ENCODE measurements at regions of chr3 and their contacts with region 1.

Region 1: DNA sequence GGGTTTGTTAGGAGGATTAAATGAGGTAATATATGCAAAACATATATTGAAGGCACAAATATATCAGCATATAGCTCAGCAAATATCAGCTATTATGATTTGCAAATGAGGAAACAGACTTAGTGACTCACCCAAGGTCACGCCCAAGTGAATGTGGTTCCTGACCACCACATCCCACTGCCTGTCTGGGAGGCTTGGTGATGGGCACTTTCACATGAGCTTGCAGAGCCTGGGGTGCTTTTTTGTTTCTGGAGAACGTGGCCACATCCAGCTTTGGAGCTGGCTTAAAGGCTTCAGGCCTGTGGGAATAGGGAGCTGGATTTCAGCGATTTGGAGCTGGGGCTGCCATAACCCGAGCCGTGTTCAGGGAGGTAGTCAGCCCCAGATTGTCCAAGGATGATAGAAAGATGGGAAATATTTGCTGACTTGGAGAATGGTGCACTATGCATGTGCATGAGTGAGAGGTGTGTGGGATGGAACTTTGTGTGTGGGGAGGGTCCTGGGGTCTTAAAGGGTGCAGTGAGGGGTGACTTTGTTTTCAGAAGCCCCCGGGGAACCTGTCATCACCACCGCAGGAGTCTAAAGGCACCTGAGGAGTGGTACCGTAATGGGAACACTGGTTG is 12.0 kb upstream of the FGD5 start:
- DNase-seq: no peak
- ATAC-seq: no peak
- H3K4me3 ChIP-seq: no peak overlapping the region
- H3K27ac ChIP-seq: no peak overlapping the region
- H3K4me1 ChIP-seq: peaks cover 8 to 29% of the 10 kb centered on the region in 2 experiments; a peak in 3 of 4 replicates
- H3K27me3 ChIP-seq: no peaks in the 10 kb centered on the region
- CTCF ChIP-seq: no peak
- POLR2A ChIP-seq: no peak
- RAD21 ChIP-seq: no peak

Region 2: GRCh38 chr3:14899993-14900618 is 93.4 kb after region 1 on chr3:
- CTCF ChIA-PET with region 1: no interaction called
- POLR2A ChIA-PET with region 1: no interaction called
- RAD21 ChIA-PET with region 1: no interaction called
- intact Hi-C with region 1: loop called (anchors 5 kb)
- DNase-seq: no peak
- ATAC-seq: peak; percentile 35; the same call in 1 of the 2 replicates
- H3K4me3 ChIP-seq: no peak overlapping the region
- H3K27ac ChIP-seq: no peak overlapping the region
- H3K4me1 ChIP-seq: no peaks in the 10 kb centered on the region
- H3K27me3 ChIP-seq: peaks cover 7% of the 10 kb centered on the region; the same call in 1 of the 2 replicates
- CTCF ChIP-seq: 0 out of 6 replicates have a peak, but pooled peaks of 1 of the 3 experiments have one; percentile 6
- POLR2A ChIP-seq: no peak
- RAD21 ChIP-seq: no peak

Region 3: GRCh38 chr3:14959359-14959943 is 152.7 kb after region 1 on chr3:
- CTCF ChIA-PET with region 1: no interaction called
- POLR2A ChIA-PET with region 1: no interaction called
- RAD21 ChIA-PET with region 1: no interaction called
- intact Hi-C with region 1: no loop called
- DNase-seq: no peak
- ATAC-seq: no peak
- H3K4me3 ChIP-seq: no peak overlapping the region
- H3K27ac ChIP-seq: no peak overlapping the region
- H3K4me1 ChIP-seq: no peaks in the 10 kb centered on the region
- H3K27me3 ChIP-seq: no peaks in the 10 kb centered on the region
- CTCF ChIP-seq: no peak
- POLR2A ChIP-seq: no peak
- RAD21 ChIP-seq: no peak

Measured in HCT116 (cell line).